Endothelial cell of umbilical vein (primary cell): ENCODE measurements at regions of chr7 and their contacts with region 1.

Region 1: DNA sequence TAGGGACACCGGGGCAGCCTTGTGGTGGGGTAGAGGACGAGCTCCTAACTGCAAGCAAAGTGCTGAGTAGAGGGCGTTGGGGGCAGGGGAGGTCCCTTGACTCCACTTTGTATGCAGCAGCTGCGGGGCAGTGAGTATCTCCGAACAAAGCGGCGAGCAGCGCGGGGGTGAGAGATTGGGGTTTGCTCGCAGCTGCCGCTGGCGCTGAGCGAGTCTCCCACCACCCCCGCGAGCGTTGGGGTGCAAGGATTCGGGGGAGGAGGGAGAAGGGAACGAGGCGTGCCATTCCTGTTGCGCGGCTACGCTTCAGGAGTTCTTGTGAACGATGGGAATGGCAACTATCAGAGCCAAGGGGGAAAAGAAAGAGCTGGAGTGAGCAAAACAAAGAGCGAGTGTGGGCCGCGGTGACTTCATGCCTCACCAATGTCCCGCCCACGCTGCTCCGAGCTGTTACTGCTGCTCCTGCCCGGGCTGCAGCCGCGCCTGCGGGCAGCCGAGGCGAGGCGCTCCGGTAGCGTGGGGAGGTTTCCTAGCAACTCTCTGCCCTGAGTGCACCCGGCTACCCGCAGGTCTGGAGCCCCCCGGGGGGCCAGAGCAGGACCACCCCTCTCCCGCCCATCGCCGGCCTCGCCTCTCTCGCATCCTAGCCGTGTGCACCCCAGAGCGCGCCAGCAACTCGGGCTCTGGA is at the start of gene ITGB8:
- DNase-seq: peak; percentile 90
- H3K4me3 ChIP-seq: peak within 1 kb of the TSS; percentile 51 to 62 (median 53)
- H3K27ac ChIP-seq: peak within 1 kb of the TSS; percentile 87
- H3K4me1 ChIP-seq: peaks cover 14% of the 10 kb centered on the region
- H3K27me3 ChIP-seq: no peaks in the 10 kb centered on the region
- CTCF ChIP-seq: no peak
- POLR2A ChIP-seq: no peak
- total RNA-seq, gene ITGB8: 6.5 and 8.2 TPM in 2 replicates

Region 2: DNA sequence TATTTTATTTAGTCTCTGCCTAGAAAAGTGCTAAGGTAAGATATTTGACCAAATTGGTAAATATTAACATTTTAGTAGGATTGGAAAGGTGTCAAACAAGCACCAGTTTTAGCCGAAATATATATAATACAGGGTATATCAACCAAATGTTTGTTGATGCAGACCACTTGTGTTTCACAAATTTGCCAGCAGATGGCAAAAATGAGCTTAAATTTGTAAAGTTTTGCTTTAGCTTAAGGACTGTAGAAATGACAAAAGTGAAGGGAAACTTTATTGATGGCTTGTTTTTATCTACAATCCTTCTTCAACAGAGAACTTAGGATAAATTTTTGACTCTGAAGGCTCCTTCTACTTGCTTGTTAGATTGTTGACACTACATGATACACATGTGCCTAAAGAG is 616.7 kb before region 1 on chr7:
- CTCF ChIA-PET with region 1: interaction called, 10 read pairs
- POLR2A ChIA-PET with region 1: no interaction called
- dilution Hi-C with region 1: no loop called
- intact Hi-C with region 1: no loop called
- DNase-seq: peak; percentile 62
- H3K4me3 ChIP-seq: no peak overlapping the region
- H3K27ac ChIP-seq: no peak overlapping the region
- H3K4me1 ChIP-seq: no peaks in the 10 kb centered on the region
- H3K27me3 ChIP-seq: peaks cover 10 to 29% of the 10 kb centered on the region in 2 experiments
- CTCF ChIP-seq: peak; percentile 20 to 39
- POLR2A ChIP-seq: no peak

Region 3: DNA sequence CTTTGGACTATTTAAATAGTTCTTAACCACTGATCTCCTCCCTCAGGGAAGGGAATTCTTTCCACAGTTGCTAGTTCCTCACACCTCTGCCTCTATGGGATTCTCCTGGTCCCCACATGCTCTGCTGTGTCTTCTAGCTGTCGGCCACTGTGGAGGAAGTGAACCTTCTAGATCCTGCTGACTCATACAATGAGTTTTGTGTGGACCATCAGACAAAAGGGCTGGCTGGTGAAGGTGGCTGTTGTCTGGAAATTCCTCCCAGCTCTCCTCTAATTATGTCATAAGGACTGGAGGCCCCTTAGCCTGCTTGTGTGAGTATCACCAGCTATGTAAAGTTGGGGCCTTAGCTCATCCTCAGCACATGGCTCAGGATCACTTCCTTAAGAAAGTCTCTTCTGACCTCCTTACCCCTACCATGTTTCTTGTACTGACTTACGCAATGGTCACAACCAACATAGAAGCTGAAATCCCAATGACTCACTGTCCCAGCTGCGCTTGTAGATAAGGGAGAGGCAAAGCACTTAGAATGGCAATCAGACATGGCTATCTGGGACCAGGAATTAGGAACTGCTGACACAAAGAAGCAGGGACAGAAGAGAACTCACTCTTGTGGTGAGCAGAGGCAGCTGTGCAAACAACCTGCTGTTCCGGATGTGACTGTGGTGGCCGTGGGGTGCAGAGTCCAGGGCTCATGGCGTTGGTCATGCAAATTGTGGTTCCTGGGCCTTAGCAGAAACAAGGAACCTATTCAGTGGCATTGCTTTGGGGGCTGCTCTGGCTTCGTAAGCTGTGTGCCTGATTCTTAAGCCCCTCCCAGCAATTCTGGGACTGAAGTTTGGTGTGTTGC is 110.7 kb before region 1 on chr7:
- CTCF ChIA-PET with region 1: no interaction called
- POLR2A ChIA-PET with region 1: no interaction called
- dilution Hi-C with region 1: no loop called
- intact Hi-C with region 1: loop called (anchors 1 kb)
- DNase-seq: peak; percentile 95
- H3K4me3 ChIP-seq: no peak overlapping the region
- H3K27ac ChIP-seq: peak overlapping the region; percentile 83
- H3K4me1 ChIP-seq: peaks cover 21% of the 10 kb centered on the region
- H3K27me3 ChIP-seq: no peaks in the 10 kb centered on the region
- CTCF ChIP-seq: no peak
- POLR2A ChIP-seq: peak; percentile 78

Region 4: GRCh38 chr7:20352573-20353304 is 22.4 kb after region 1 on chr7:
- CTCF ChIA-PET with region 1: interaction called, 4 read pairs
- POLR2A ChIA-PET with region 1: interaction called, 5 read pairs
- dilution Hi-C with region 1: no loop called
- intact Hi-C with region 1: loop called (anchors 1 kb)
- DNase-seq: peak; percentile 73
- H3K4me3 ChIP-seq: no peak overlapping the region
- H3K27ac ChIP-seq: peak overlapping the region; percentile 86
- H3K4me1 ChIP-seq: peaks cover 30% of the 10 kb centered on the region
- H3K27me3 ChIP-seq: no peaks in the 10 kb centered on the region
- CTCF ChIP-seq: no peak
- POLR2A ChIP-seq: no peak

Region 5: GRCh38 chr7:20402747-20403230 is 72.4 kb after region 1 on chr7:
- CTCF ChIA-PET with region 1: interaction called, 8 read pairs
- POLR2A ChIA-PET with region 1: interaction called, 3 read pairs
- dilution Hi-C with region 1: no loop called
- intact Hi-C with region 1: loop called (anchors 2 kb)
- DNase-seq: no peak
- H3K4me3 ChIP-seq: no peak overlapping the region
- H3K27ac ChIP-seq: no peak overlapping the region
- H3K4me1 ChIP-seq: peaks cover 16% of the 10 kb centered on the region
- H3K27me3 ChIP-seq: no peaks in the 10 kb centered on the region
- CTCF ChIP-seq: peak; percentile 23 to 31
- POLR2A ChIP-seq: no peak

Region 6: DNA sequence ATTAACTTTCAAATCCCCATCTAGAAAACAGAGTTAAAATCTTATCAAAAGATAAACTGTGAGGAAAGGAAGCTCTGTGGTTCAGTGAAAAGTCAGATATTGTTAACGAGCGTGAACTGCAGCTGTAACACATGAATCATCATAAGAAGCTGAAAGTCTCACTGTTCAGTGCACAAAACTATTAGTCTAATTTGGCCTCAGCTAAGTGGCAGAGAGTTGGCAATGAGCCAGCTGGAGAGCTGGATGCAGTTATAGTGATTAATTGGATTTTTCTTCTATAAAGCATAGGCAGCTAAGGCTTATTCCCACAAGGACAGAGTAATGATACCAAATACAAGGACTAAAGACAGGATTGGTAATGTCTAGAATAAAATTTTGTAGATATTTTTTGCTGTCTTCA is 184.0 kb after region 1 on chr7:
- CTCF ChIA-PET with region 1: interaction called, 3 read pairs
- POLR2A ChIA-PET with region 1: no interaction called
- dilution Hi-C with region 1: no loop called
- intact Hi-C with region 1: loop called (anchors 2 kb)
- DNase-seq: peak; percentile 98
- H3K4me3 ChIP-seq: no peak overlapping the region
- H3K27ac ChIP-seq: peak overlapping the region; percentile 74
- H3K4me1 ChIP-seq: peaks cover 33% of the 10 kb centered on the region
- H3K27me3 ChIP-seq: no peaks in the 10 kb centered on the region
- CTCF ChIP-seq: no peak
- POLR2A ChIP-seq: no peak

Region 7: DNA sequence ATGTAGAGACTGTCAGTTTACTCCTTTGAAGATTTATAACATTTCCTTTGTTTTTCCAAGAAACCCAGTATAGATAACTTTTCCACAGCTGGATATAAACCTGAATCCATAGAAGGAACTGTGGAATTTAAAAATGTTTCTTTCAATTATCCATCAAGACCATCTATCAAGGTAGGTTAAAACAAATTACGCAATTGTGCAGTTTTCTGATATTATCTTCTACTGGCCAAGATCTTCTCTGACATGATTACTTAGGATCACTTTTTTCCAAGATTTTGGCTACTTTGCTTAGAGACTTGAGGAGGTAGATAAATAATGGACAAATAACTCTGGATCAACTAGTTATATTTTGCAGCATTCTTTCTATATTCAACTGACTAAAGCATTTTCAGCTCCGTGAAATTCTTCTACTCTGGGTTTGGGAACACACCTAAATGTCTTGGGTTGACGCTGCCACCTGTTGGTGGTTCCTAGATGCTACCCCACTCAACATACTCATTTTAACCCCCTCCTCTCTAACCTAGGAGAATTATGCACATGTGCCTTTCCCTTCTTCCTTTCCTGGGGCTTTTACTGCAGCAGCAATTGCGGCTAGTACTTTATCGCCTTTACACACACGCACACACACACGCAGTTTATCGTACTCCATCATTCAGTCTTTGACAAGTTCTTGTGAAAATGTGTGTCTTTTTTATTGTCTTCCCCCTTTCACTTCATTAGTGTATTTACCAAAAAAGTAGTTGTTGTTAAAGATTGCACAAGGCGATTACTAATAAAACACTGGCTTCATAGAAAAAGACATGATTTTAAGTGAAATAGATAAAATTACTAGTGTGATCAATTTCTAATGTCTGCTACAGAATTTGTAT is 317.8 kb after region 1 on chr7:
- CTCF ChIA-PET with region 1: interaction called, 5 read pairs
- POLR2A ChIA-PET with region 1: no interaction called
- dilution Hi-C with region 1: no loop called
- intact Hi-C with region 1: loop called (anchors 5 kb)
- DNase-seq: peak; percentile 64
- H3K4me3 ChIP-seq: no peak overlapping the region
- H3K27ac ChIP-seq: no peak overlapping the region
- H3K4me1 ChIP-seq: no peaks in the 10 kb centered on the region
- H3K27me3 ChIP-seq: peaks cover 0 to 4% of the 10 kb centered on the region in 2 experiments
- CTCF ChIP-seq: peak; percentile 54 to 64
- POLR2A ChIP-seq: no peak